Activated T-helper 2 cell treated with anti-CD3 and anti-CD28 coated beads, Interferon-gamma antibody, Interleukin-2, Interleukin-4, amounts not matched to agents 10 μg/mL and 5 μg/mL and 100 μg/mL, durations not matched to agents 14 hours and 24 hours and 36 hours (primary cell): ENCODE measurements at regions of chr10 and their contacts with region 1.

Region 1: DNA sequence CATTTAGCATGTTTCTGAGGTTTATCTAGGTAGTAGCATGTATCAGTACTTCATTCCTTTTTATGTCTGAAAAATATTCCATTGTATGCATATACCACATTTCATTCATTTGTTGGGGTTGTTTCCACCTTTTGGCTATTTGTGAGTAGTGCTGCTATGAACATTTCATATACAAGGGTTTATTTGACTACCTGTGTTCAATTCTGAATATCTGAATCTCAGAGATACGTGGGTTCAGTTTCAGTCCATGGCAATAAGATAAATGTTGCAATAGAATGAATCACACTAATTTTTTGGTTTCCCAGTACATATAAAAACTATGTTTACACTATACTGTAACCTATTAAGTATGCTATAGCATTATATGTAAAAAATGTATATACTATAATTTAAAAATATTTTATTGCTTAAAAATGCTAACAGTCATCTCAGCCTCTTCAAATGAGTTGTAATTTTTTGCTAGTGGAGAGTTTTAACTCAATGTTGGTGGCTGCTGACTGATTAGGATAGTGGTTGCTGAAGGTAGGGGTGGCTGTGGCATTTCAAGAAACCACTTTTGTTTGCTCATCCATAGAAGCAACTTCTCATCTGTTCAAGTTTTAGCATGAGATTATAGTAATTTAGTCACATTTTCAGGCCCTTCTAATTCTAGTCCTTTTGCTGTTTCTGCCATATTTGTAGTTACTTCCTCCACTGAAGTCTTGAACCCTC is 13.9 kb downstream of the PLEKHA1 start:
- DNase-seq: no peak
- H3K4me3 Mint-ChIP-seq: no peak overlapping the region
- H3K27ac Mint-ChIP-seq: peak overlapping the region; percentile 54
- H3K4me1 Mint-ChIP-seq: peaks cover 11% of the 10 kb centered on the region
- H3K27me3 Mint-ChIP-seq: peaks cover 40% of the 10 kb centered on the region

Region 2: GRCh38 chr10:122298598-122299301 is 89.7 kb before region 1 on chr10:
- intact Hi-C with region 1: no loop called
- DNase-seq: peak; percentile 34
- H3K4me3 Mint-ChIP-seq: no peak overlapping the region
- H3K27ac Mint-ChIP-seq: no peak overlapping the region
- H3K4me1 Mint-ChIP-seq: peaks cover 10% of the 10 kb centered on the region
- H3K27me3 Mint-ChIP-seq: peaks cover 6% of the 10 kb centered on the region

Region 3: GRCh38 chr10:122333037-122333436 is 55.4 kb before region 1 on chr10:
- intact Hi-C with region 1: loop called (anchors 1 kb)
- DNase-seq: no peak
- H3K4me3 Mint-ChIP-seq: no peak overlapping the region
- H3K27ac Mint-ChIP-seq: no peak overlapping the region
- H3K4me1 Mint-ChIP-seq: peaks cover 4% of the 10 kb centered on the region
- H3K27me3 Mint-ChIP-seq: peaks cover 15% of the 10 kb centered on the region